Activated CD4-positive, alpha-beta memory T cell treated with anti-CD3 and anti-CD28 coated beads for 36 hours (primary cell): ENCODE measurements at regions of chr5 and their contacts with region 1.

Region 1: GRCh38 chr5:43484106-43484849 is 613 bp upstream of the TMEM267 start:
- DNase-seq: peak; percentile 93
- H3K4me3 Mint-ChIP-seq: peak overlapping the region; percentile 98
- H3K27ac Mint-ChIP-seq: peak overlapping the region; percentile 100
- H3K4me1 Mint-ChIP-seq: peaks cover 49% of the 10 kb centered on the region
- H3K27me3 Mint-ChIP-seq: no peaks in the 10 kb centered on the region

Region 2: DNA sequence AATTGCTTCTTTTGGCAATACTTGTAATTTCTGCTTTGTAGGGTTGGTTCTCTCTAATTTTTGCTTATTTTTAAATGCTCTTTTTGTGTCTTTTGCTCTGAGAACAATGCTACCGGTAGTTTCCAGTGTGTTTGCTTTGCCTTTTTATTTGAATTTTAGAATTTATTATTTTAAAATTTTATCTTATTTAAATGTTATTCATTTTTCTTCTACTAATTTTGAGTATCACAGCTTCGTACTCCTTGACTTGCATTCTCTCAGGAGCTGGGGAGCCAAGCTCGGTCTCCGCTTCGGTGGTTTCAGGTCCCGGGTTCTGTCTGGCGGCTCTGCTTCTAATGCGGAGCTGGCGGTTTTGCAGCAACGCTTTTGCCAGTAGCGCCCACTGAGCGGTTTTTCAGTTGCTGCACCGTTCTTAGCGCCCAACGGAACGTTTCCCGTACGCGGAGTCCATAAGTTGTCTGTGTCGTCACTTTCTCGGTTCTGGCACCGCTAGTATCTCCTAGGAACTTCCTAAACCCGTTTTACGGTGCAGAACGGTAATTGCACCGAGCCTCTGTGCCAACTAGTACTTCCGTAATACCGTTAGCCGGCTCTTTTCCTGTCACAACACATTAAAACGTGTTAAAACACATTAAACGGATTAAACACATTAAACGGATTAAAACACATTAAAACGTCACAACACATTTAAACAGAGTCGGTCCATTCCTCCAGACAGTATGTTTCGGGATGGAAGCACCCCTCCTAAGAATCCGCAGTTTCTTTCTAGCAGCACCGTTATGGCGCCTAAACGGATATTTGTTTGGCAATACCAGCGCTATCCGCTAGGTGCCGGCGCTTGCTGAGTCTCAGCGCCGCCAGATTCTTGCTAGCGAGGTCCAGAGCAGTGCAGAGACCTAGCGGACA is 489.8 kb before region 1 on chr5:
- CTCF ChIA-PET with region 1: no interaction called
- POLR2A ChIA-PET with region 1: no interaction called
- intact Hi-C with region 1: loop called (anchors 10 kb)
- DNase-seq: peak; percentile 93
- H3K4me3 Mint-ChIP-seq: peak overlapping the region; percentile 87
- H3K27ac Mint-ChIP-seq: peak overlapping the region; percentile 94
- H3K4me1 Mint-ChIP-seq: peaks cover 25% of the 10 kb centered on the region
- H3K27me3 Mint-ChIP-seq: no peaks in the 10 kb centered on the region

Region 3: GRCh38 chr5:43191740-43192557 is 292.3 kb before region 1 on chr5 and contains the start of gene NIM1K:
- CTCF ChIA-PET with region 1: interaction called, 6 read pairs
- POLR2A ChIA-PET with region 1: interaction called, 3 read pairs
- intact Hi-C with region 1: loop called (anchors 1 kb)
- DNase-seq: peak; percentile 62
- H3K4me3 Mint-ChIP-seq: peak within 1 kb of the TSS; percentile 78
- H3K27ac Mint-ChIP-seq: no peak within 1 kb of the TSS
- H3K4me1 Mint-ChIP-seq: peaks cover 31% of the 10 kb centered on the region
- H3K27me3 Mint-ChIP-seq: peaks cover 16% of the 10 kb centered on the region
- total RNA-seq, gene NIM1K: 0.75 to 1.00 TPM

Region 4: DNA sequence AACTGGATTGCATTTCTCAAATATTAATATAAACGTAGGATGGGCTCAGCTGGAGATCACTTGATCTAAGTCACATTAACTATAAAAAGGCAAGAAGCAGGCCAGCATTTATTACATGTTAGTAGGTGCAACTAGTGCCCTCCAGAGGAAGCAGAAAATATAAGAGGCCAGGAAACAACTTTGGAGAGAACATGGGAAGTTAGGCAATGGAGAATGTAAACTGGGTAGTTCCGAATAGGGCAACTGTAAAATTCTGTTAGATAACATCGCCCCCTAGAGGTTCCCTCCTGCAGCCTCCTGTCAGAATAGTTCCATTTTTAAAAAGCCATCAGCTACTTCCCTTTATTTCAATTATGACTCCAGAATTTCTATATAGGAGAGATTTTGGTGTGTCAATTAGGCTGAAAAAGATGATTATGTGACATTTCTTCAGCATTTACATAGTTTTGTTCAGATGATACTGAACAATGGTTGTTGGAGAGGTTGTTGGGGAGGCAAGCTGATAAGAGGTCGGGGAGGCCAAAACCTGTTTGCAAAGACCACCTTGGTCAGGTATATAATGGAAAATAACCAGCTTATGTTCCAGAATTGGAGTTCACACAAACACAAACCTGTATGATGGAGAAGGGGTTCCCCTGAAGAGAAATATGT is 94.5 kb before region 1 on chr5:
- CTCF ChIA-PET with region 1: interaction called, 22 read pairs
- POLR2A ChIA-PET with region 1: no interaction called
- intact Hi-C with region 1: no loop called
- DNase-seq: peak; percentile 58
- H3K4me3 Mint-ChIP-seq: no peak overlapping the region
- H3K27ac Mint-ChIP-seq: no peak overlapping the region
- H3K4me1 Mint-ChIP-seq: peaks cover 31% of the 10 kb centered on the region
- H3K27me3 Mint-ChIP-seq: no peaks in the 10 kb centered on the region

Region 5: GRCh38 chr5:43461066-43461465 is 23.2 kb before region 1 on chr5:
- CTCF ChIA-PET with region 1: no interaction called
- POLR2A ChIA-PET with region 1: no interaction called
- intact Hi-C with region 1: no loop called
- DNase-seq: no peak
- H3K4me3 Mint-ChIP-seq: no peak overlapping the region
- H3K27ac Mint-ChIP-seq: no peak overlapping the region
- H3K4me1 Mint-ChIP-seq: peaks cover 3% of the 10 kb centered on the region
- H3K27me3 Mint-ChIP-seq: no peaks in the 10 kb centered on the region

Region 6: GRCh38 chr5:43514816-43515677 is 30.8 kb after region 1 on chr5 and contains the start of gene C5orf34:
- CTCF ChIA-PET with region 1: interaction called, 19 read pairs
- POLR2A ChIA-PET with region 1: interaction called, 43 read pairs
- intact Hi-C with region 1: loop called (anchors 1 kb)
- DNase-seq: peak; percentile 97
- H3K4me3 Mint-ChIP-seq: peak within 1 kb of the TSS; percentile 95
- H3K27ac Mint-ChIP-seq: peak within 1 kb of the TSS; percentile 99
- H3K4me1 Mint-ChIP-seq: peaks cover 26% of the 10 kb centered on the region
- H3K27me3 Mint-ChIP-seq: no peaks in the 10 kb centered on the region
- total RNA-seq, gene C5orf34: 11.8 to 13.1 TPM

Region 7: DNA sequence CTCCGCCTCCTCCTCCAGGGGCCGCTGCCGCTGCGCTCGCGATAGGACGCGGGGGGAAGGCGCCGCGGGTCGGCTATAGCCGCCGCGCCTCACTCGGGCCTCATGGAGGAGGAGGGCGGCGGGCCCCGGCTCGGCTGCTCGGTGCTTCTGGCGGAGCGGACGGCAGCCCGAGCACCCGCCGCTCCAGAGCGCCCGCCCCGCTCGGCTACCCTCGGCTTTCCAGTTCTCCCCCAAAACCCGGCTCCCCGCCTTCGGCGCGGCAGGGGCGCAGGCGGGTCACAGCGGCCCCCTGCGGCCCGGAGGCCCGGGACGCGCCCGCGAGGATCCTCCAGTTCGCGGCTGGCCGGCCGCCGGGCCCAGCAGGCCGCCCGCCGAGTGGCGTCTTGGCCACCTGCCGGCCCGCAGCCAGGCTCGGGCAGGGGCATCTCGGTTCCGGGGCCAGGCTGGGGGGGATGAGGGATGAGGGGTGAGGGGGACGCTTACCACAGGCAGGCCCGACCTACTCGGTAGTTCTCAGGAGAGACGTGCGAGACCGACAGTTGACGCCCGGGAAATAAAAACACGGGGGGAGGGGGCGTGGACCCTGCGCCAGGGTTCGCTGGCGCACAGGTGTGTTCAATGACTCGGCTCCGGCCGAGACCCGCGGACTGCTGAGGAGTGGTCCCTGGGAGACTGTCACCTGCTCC is 72.7 kb after region 1 on chr5 and contains the start of gene PAIP1:
- CTCF ChIA-PET with region 1: interaction called, 13 read pairs
- POLR2A ChIA-PET with region 1: interaction called, 19 read pairs
- intact Hi-C with region 1: loop called (anchors 1 kb)
- DNase-seq: peak; percentile 89
- H3K4me3 Mint-ChIP-seq: peak within 1 kb of the TSS; percentile 90
- H3K27ac Mint-ChIP-seq: peak within 1 kb of the TSS; percentile 91
- H3K4me1 Mint-ChIP-seq: peaks cover 15% of the 10 kb centered on the region
- H3K27me3 Mint-ChIP-seq: no peaks in the 10 kb centered on the region
- total RNA-seq, gene PAIP1: 49.2 to 50.5 TPM

Region 8: GRCh38 chr5:43573058-43573457 is 88.8 kb after region 1 on chr5:
- CTCF ChIA-PET with region 1: no interaction called
- POLR2A ChIA-PET with region 1: no interaction called
- intact Hi-C with region 1: no loop called
- DNase-seq: no peak
- H3K4me3 Mint-ChIP-seq: no peak overlapping the region
- H3K27ac Mint-ChIP-seq: no peak overlapping the region
- H3K4me1 Mint-ChIP-seq: peaks cover under 1% of the 10 kb centered on the region
- H3K27me3 Mint-ChIP-seq: no peaks in the 10 kb centered on the region

Region 9: DNA sequence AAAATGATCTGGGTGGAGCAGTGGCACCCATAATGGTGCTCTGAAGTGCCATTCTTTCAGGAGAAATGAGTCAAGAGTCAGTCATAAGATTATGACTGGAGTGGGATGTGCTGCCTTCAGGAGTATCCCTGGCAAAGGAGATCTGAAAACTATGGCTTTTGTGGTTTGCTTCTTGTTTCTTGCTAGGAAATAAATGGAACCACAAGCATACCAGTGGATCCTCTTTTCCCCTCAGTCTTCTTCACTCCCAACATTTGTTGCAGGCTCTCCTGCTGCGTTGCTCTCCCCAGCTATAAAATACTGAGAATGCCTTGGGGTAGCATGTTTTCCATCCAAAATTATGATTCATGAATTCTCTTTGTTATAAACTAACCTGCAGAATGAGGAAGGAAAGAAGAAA is 317.8 kb after region 1 on chr5:
- CTCF ChIA-PET with region 1: no interaction called
- POLR2A ChIA-PET with region 1: no interaction called
- intact Hi-C with region 1: no loop called
- DNase-seq: no peak
- H3K4me3 Mint-ChIP-seq: no peak overlapping the region
- H3K27ac Mint-ChIP-seq: no peak overlapping the region
- H3K4me1 Mint-ChIP-seq: no peaks in the 10 kb centered on the region
- H3K27me3 Mint-ChIP-seq: no peaks in the 10 kb centered on the region

Region 10: DNA sequence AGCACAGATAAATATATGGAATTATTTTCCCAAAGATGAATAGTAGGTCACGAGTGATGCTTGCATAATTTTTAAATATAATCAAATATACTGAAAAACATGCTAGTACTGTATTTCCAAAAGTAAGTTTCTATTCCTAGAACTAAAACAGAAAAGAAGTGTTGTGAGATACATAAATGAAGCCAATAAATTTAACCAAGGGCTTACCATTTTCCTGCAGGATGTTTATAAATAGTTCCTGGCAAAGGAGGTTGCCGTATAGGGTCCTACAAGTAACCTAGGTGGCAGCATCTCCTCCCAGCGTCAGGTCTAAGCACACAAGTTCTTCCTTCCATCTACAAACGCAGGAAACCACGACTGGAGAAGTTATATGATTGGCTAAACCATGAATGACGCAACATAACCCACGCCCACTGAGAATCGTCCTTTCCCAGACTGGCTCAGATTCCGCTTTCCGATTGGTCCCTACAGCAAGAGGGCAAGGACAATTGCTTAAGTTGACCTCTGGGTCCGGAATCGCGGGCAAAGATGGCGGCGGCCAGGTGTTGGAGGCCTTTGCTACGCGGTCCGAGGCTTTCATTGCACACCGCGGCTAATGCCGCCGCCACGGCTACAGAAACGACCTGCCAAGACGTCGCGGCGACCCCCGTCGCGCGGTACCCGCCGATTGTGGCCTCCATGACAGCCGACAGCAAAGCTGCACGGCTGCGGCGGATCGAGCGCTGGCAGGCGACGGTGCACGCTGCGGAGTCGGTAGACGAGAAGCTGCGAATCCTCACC is 1324.3 kb after region 1 on chr5 and contains the start of gene MRPS30:
- CTCF ChIA-PET with region 1: no interaction called
- POLR2A ChIA-PET with region 1: interaction called, 7 read pairs
- intact Hi-C with region 1: loop called (anchors 1 kb)
- DNase-seq: peak; percentile 94
- H3K4me3 Mint-ChIP-seq: peak within 1 kb of the TSS; percentile 99
- H3K27ac Mint-ChIP-seq: peak within 1 kb of the TSS; percentile 98
- H3K4me1 Mint-ChIP-seq: peaks cover 29% of the 10 kb centered on the region
- H3K27me3 Mint-ChIP-seq: peaks cover 1% of the 10 kb centered on the region
- total RNA-seq, gene MRPS30: 47.1 to 49.3 TPM